ENCODE measurements at regions of chr6 and their contacts with region 1.

Region 1: GRCh38 chr6:411421-412145 is 20.0 kb downstream of the IRF4 start:
- DNase-seq: peak; percentile 80
- ATAC-seq: peak; percentile 25
- H3K4me3 ChIP-seq: peak overlapping the region; percentile 6
- H3K27ac ChIP-seq: peak overlapping the region; percentile 66
- H3K4me1 ChIP-seq: peaks cover 13% of the 10 kb centered on the region
- H3K27me3 ChIP-seq: no peaks in the 10 kb centered on the region
- CTCF ChIP-seq: no peak

Region 2: DNA sequence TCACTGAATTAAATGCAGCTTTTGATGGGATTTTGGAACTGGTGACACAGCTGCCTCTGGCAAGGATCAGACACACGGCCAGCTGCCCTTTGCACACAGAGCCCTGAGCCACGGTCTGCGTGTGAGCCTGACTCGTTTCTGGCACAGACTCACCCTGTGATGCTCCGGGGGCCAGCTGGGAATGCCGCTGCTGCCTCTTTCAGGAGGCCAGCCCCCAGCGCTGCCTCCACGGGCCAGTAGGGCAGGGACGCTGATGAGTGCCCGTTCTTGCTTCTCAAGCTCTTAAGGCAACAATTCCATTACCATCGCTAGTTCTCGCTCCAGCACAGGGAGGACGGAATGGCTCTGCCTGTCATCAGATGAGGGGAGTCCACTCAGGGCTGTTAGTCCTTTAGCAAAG is 41.6 kb after region 1 on chr6:
- intact Hi-C with region 1: no loop called
- DNase-seq: peak; percentile 64
- ATAC-seq: peak; percentile 40
- H3K4me3 ChIP-seq: no peak overlapping the region
- H3K27ac ChIP-seq: no peak overlapping the region
- H3K4me1 ChIP-seq: no peaks in the 10 kb centered on the region
- H3K27me3 ChIP-seq: no peaks in the 10 kb centered on the region
- CTCF ChIP-seq: no peak

Region 3: DNA sequence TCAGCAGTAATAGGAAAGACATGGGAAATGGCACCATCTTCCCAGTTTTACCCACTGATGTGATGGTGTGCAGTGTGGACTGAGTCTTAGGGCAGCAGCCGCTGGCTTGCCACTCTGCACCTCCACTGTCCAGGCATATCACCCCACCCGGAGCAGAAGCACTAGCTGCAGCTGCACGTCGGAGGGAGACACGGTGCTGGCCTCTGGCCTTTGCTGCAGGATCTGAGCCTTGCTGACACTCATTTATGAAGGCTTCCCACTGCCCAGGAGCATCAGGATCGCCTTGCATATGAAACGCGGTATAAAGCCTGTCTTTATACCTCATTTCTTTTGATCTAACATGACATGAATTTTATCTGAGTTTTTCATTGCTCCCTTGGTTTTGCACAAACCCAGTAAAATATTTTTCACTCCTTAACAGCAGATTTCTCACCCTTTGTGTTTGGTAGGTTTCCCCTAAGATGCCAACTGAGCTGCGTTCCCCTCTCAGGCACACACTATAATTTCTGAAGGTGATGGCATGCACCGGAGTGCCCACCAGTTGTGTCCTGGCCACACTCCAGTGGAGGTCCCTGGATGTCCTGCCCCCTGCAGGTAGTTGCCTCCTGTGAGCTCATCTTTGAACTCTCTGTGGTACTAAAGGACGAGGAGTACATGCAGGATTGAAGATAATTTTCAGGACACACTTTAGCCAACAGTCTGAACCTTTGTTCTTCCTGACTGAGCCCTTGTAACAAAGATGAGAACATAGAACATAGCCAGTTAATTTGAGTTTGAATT is 290.3 kb after region 1 on chr6:
- intact Hi-C with region 1: loop called (anchors 5 kb)
- DNase-seq: no peak
- ATAC-seq: no peak
- H3K4me3 ChIP-seq: no peak overlapping the region
- H3K27ac ChIP-seq: no peak overlapping the region
- H3K4me1 ChIP-seq: no peaks in the 10 kb centered on the region
- H3K27me3 ChIP-seq: no peaks in the 10 kb centered on the region
- CTCF ChIP-seq: no peak